ENCODE measurements at regions of chr22 and their contacts with region 1.

Region 1: GRCh38 chr22:33083212-33083611 is 25.0 kb upstream of the SYN3 start:
- DNase-seq: no peak
- ATAC-seq: no peak
- H3K4me3 Mint-ChIP-seq: no peak overlapping the region
- H3K27ac Mint-ChIP-seq: no peak overlapping the region
- H3K4me1 Mint-ChIP-seq: no peaks in the 10 kb centered on the region
- H3K27me3 Mint-ChIP-seq: peaks cover 22% of the 10 kb centered on the region
- CTCF ChIP-seq: no peak

Region 2: DNA sequence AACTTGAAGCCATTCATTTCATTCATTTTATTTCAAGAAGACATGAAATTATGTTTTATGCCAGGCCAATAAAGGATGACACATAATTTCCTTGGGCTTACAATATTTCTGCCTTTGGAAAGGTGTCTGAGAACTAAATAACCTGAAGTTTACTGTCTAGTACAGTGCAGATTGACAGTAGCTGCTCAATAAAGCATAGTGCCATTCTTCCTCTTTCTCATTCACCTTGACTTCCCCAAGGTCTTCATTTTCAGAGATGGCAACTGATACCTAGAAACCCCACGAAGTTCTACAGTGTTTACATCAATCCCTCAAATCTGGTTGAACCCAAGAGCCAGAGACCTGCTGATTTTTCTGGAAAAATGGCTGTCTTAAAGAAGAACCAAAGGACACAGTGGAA is 119.2 kb after region 1 on chr22:
- CTCF ChIA-PET with region 1: interaction called, 3 read pairs
- POLR2A ChIA-PET with region 1: no interaction called
- intact Hi-C with region 1: loop called (anchors 2 kb)
- DNase-seq: no peak
- ATAC-seq: no peak
- H3K4me3 Mint-ChIP-seq: no peak overlapping the region
- H3K27ac Mint-ChIP-seq: no peak overlapping the region
- H3K4me1 Mint-ChIP-seq: peaks cover 35% of the 10 kb centered on the region
- H3K27me3 Mint-ChIP-seq: no peaks in the 10 kb centered on the region
- CTCF ChIP-seq: no peak